SK-N-SH (cell line): ENCODE measurements at regions of chr22 and their contacts with region 1.

Region 1: GRCh38 chr22:36286471-36287224 is 33.7 kb downstream of the APOL1 start:
- DNase-seq: peak; percentile 94
- H3K4me3 ChIP-seq: no peak overlapping the region
- H3K27ac ChIP-seq: peak overlapping the region in 1 of 2 experiments; percentile 29; a peak in 2 of 4 replicates
- H3K4me1 ChIP-seq: no peaks in the 10 kb centered on the region; a peak in 1 of 4 replicates
- H3K27me3 ChIP-seq: no peaks in the 10 kb centered on the region
- CTCF ChIP-seq: peak; percentile 90
- EP300 ChIP-seq: no peak
- RAD21 ChIP-seq: peak; percentile 82

Region 2: DNA sequence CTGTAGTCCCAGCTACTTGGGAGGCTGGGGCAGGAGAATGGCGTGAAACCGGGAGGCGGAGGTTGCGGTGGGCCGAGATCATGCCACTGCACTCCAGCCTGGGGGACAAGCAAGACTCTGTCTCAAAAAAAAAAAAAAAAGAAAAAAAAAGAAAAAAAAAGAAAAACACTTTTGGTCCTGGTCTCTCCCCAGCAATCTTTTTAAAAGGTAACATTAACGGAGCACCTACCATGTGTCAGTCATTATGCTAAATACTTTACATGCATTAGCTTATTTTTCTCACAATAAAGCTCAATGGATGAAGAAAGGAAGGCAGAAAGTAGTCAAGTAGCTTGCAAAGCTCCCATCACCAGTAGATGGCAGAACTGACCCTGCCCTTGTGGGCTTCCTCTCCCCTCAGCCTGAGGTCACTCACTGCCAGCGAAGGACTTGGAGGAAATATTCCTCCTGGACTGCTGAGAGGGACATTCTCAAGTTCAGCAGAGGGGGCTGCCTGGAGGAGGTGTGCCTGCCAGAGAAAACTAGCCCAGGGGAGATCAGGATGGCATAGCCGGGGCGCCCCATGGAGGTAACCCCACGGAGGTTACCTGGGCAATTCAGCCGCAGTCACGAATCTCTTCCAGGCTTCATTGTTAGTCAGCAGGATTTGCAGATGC is 141.6 kb before region 1 on chr22:
- CTCF ChIA-PET with region 1: interaction called, 15 read pairs
- POLR2A ChIA-PET with region 1: no interaction called
- DNase-seq: peak; percentile 57
- H3K4me3 ChIP-seq: no peak overlapping the region
- H3K27ac ChIP-seq: no peak overlapping the region
- H3K4me1 ChIP-seq: peaks cover 0 to 8% of the 10 kb centered on the region in 2 experiments; a peak in 1 of 4 replicates
- H3K27me3 ChIP-seq: no peaks in the 10 kb centered on the region
- CTCF ChIP-seq: peak; percentile 82
- EP300 ChIP-seq: no peak
- RAD21 ChIP-seq: peak; percentile 85

Region 3: DNA sequence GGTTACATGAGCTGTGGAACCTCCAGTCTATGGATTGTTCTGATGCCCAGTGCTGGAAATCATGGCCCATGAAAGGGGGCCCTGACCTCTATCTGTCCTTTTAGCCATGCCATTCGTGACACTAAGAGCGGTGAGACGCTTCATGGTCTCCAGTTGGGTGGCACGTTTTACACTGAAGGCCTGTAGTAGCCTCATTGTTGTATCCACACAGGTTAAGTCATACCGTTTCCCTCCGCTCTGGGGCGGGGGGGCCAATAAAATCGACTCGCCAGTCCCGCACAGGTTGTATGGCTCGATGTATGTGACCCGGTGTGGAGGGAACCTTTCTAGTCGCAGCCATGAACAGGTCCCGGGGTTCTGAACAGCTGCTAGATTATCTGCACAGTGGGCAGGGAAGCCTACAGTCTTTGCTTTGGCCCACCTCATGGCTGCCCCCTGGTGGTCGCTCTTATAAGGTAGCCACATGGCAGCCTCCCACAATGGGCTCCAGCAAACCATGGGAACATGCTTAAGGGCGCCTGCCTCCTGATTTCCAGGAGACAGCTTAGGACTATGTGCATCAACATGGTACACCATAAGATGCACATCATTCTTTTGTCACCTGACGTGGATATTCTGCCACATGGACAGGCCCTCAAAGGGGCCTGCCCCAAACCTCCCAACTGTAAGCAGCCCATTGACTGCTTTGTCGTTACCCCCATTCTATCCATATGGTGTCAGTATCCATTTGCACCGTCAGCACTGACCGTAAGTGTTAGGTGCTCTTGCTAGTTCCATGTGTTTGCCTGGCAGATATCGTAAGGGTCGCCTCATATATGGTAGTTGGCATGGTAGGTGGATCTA is 106.4 kb before region 1 on chr22:
- CTCF ChIA-PET with region 1: interaction called, 10 read pairs
- POLR2A ChIA-PET with region 1: no interaction called
- DNase-seq: peak; percentile 67
- H3K4me3 ChIP-seq: no peak overlapping the region
- H3K27ac ChIP-seq: no peak overlapping the region
- H3K4me1 ChIP-seq: peaks cover 3 to 6% of the 10 kb centered on the region in 2 experiments; a peak in 1 of 4 replicates
- H3K27me3 ChIP-seq: no peaks in the 10 kb centered on the region
- CTCF ChIP-seq: peak; percentile 75
- EP300 ChIP-seq: no peak
- RAD21 ChIP-seq: peak; percentile 60

Region 4: GRCh38 chr22:36201630-36202319 is 84.9 kb before region 1 on chr22 and contains the start of gene APOL4:
- CTCF ChIA-PET with region 1: interaction called, 11 read pairs
- POLR2A ChIA-PET with region 1: no interaction called
- DNase-seq: peak; percentile 61
- H3K4me3 ChIP-seq: peak within 1 kb of the TSS in 1 of 2 experiments; percentile 38; a peak in 1 of 4 replicates
- H3K27ac ChIP-seq: peak within 1 kb of the TSS in 1 of 2 experiments; percentile 92; a peak in 2 of 4 replicates
- H3K4me1 ChIP-seq: peaks cover 10 to 50% of the 10 kb centered on the region in 2 experiments; a peak in 2 of 4 replicates
- H3K27me3 ChIP-seq: no peaks in the 10 kb centered on the region
- CTCF ChIP-seq: no peak
- EP300 ChIP-seq: no peak
- RAD21 ChIP-seq: no peak
- polyA plus RNA-seq, gene APOL4: 0.08 and 0.21 TPM in 2 replicates

Region 5: DNA sequence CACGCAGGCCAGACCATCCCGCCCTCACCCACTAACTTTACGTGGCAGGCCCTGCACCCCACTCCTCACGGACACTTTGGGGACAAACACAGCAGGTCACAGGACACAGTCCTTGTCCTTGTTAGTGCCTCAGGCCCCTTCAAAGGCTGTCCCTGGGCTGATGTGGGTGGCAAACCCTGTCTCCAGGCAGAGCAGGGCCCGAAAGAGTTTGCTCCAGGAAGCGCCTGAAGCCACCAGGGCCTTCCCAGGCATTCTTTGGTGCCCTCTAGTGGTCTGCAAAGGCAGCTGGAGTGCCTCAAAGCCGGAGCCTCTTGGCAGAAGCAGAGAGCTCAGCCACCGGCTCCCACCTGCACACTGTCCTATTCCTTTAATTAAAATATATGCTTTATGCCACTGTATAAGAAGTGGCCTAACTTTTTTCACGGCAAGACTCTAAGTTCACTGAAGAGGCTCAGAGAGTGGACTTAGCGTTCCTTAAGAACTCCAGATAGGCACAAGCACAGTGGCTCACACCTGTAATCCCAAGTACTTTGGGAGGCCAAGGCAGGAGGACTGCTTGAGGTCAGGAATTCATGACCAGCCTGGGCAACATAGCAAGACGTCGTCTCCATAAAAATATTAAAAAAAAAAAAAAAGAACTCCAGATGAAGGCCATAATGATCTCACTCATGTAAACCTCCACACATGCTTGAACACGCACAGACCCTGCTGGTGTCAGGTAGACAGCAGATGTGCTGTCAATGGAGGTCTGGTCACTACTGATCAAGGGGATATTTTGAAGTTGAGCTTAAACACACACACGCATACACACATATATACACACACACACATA is 183.7 kb after region 1 on chr22:
- CTCF ChIA-PET with region 1: interaction called, 329 read pairs
- POLR2A ChIA-PET with region 1: no interaction called
- DNase-seq: peak; percentile 82
- H3K4me3 ChIP-seq: no peak overlapping the region
- H3K27ac ChIP-seq: peak overlapping the region in 1 of 2 experiments; percentile 100; a peak in 2 of 4 replicates
- H3K4me1 ChIP-seq: peaks cover 3 to 45% of the 10 kb centered on the region in 2 experiments; a peak in 3 of 4 replicates
- H3K27me3 ChIP-seq: no peaks in the 10 kb centered on the region
- CTCF ChIP-seq: peak; percentile 94
- EP300 ChIP-seq: no peak
- RAD21 ChIP-seq: peak; percentile 93

Region 6: DNA sequence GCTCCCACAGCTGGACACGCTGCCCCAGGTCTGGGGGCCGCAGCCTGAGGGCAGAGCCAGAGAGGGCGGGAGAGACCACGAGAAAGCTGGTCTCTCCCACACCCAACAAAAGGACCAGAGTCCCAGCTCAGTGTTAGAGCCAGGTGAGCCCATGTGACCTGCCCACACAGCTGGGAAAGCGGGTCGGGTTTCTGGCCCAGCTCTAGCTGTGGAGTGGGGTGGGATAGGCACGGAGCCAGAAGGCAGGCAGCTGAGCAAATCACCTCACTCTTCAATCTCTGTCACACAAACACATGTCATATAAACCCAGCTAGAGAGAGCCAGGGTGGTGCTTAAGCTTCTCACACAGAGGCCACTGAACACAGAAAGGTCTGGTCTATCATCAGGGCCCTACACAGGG is 250.1 kb after region 1 on chr22:
- CTCF ChIA-PET with region 1: no interaction called
- POLR2A ChIA-PET with region 1: no interaction called
- DNase-seq: no peak
- H3K4me3 ChIP-seq: no peak overlapping the region
- H3K27ac ChIP-seq: no peak overlapping the region
- H3K4me1 ChIP-seq: peaks cover 0 to 3% of the 10 kb centered on the region in 2 experiments; a peak in 1 of 4 replicates
- H3K27me3 ChIP-seq: no peaks in the 10 kb centered on the region
- CTCF ChIP-seq: no peak
- EP300 ChIP-seq: no peak
- RAD21 ChIP-seq: no peak